ENCODE measurements at regions of chr9 and their contacts with region 1.

Region 1: GRCh38 chr9:4762108-4762885 is 21.3 kb upstream of the AK3 start:
- DNase-seq: peak; percentile 88
- H3K4me3 Mint-ChIP-seq: peak overlapping the region; percentile 17
- H3K27ac Mint-ChIP-seq: peak overlapping the region; percentile 42
- H3K4me1 Mint-ChIP-seq: peaks cover 11% of the 10 kb centered on the region
- H3K27me3 Mint-ChIP-seq: peaks cover 3% of the 10 kb centered on the region

Region 2: DNA sequence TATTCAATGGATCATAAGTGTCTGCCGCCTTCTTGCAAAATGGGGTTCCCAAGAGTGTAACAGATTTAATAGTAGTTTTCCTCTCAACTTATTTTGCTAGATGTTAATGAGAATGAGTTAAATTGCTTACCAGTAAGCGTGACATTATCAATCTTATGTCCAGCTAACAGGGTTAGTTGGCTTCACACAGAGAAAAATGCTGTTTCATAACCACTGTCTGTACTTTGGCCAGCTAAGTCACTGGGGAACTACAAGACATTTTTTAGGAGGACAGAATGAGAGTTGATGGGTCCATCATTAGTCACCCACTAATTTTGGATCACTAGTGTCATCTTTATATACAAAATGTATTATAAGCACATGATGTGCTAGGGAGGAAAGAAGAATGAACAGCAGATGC is 81.5 kb before region 1 on chr9:
- CTCF ChIA-PET with region 1: no interaction called
- POLR2A ChIA-PET with region 1: no interaction called
- intact Hi-C with region 1: no loop called
- DNase-seq: no peak
- H3K4me3 Mint-ChIP-seq: no peak overlapping the region
- H3K27ac Mint-ChIP-seq: no peak overlapping the region
- H3K4me1 Mint-ChIP-seq: peaks cover 19% of the 10 kb centered on the region
- H3K27me3 Mint-ChIP-seq: no peaks in the 10 kb centered on the region

Region 3: DNA sequence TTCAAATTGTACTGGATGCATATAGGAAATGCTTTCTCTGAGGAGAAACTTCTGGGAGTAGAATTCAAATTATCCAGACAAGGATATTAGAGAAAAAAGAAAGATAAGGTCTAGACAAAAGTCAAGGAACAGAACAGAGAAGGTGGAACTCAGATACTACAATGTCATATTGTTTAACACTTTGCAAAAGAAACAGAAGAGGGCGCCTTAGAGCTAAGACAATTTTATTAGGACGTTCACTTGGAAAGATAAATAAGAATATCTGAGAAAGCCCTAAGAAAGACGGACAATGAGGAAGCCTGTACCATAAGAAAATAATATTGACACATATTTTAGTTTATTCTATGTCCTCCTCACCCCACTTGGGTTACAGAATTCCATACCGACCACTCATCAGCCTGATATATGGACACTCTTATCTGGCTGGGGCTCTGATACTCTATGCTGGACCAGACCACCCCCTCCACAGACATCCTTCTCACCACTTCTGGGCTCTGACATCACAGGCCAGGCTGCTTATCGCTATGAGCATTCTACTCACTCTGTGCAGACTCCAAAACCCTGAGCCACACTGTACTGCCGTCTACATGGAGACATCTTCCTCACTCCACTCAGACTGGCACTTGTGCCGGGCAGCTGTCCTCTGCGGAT is 12.1 kb before region 1 on chr9:
- CTCF ChIA-PET with region 1: interaction called, 33 read pairs
- POLR2A ChIA-PET with region 1: no interaction called
- intact Hi-C with region 1: no loop called
- DNase-seq: no peak
- H3K4me3 Mint-ChIP-seq: no peak overlapping the region
- H3K27ac Mint-ChIP-seq: no peak overlapping the region
- H3K4me1 Mint-ChIP-seq: peaks cover 20% of the 10 kb centered on the region
- H3K27me3 Mint-ChIP-seq: no peaks in the 10 kb centered on the region

Region 4: DNA sequence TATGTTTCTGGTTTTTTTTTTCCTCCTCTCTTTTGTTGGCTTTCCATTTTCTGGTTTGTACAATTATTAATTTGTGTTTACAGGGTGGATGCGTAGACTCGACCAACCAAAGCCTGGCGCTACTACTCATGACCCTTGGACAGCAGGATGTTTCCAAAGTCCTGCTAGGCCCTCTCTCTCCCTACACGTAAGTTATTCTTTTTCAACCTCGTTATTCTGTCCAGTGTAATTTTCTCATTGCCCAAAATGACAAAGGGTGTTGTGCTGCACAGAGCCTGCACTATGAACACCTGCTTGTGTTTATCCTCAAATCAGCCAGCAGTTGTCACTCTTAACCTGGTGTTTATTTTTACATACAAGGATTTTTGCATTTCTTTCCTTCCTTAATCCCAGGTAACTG is 87.1 kb after region 1 on chr9:
- CTCF ChIA-PET with region 1: interaction called, 5 read pairs
- POLR2A ChIA-PET with region 1: no interaction called
- intact Hi-C with region 1: loop called (anchors 5 kb)
- DNase-seq: no peak
- H3K4me3 Mint-ChIP-seq: no peak overlapping the region
- H3K27ac Mint-ChIP-seq: no peak overlapping the region
- H3K4me1 Mint-ChIP-seq: peaks cover 5% of the 10 kb centered on the region
- H3K27me3 Mint-ChIP-seq: no peaks in the 10 kb centered on the region

Region 5: DNA sequence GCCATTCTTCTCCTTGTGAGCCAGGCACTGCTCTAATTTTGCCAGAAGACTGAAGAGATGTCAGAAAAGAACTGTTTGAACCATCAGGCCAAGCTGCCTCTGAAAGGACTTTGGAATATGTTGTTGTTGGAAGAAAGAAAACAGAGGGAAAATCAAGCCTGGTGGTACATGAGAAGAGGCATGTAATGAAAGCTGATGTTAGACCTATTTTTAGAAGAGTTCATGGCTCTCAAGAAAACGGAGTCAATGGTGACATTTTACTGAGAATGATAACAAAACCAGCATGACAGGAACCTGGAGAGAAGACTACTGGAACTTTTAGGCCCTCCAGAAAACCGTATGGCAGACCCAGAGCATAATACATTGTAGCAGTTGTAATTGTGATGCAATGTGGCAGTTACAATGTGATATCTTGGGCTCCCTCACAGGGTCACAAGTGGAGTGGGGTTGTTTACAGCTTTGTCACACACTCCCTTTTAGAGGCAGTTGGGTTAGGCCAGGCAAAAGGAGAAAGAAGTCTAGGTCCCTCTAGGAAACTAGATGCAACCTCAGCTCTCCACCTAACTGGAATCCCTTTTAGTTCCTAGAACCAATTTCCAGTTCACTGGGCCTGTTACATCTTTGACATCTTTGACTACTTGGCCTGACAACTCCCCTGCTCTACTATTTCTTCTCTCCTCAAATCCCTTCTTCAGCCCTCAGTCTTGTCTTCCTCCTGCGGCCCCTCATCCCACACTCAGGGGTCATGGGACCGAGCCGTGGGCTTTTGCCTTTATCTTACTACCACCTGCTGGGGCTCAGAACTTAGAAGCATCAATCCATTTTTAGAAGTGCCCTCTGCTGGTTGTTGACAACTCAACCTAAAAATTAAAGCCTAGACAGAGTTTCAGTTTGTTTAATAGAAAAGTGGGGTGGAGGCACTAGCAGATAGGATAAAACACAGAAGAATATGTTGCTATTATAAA is 161.6 kb after region 1 on chr9:
- CTCF ChIA-PET with region 1: interaction called, 26 read pairs
- POLR2A ChIA-PET with region 1: no interaction called
- intact Hi-C with region 1: loop called (anchors 1 kb)
- DNase-seq: no peak
- H3K4me3 Mint-ChIP-seq: no peak overlapping the region
- H3K27ac Mint-ChIP-seq: no peak overlapping the region
- H3K4me1 Mint-ChIP-seq: peaks cover 22% of the 10 kb centered on the region
- H3K27me3 Mint-ChIP-seq: no peaks in the 10 kb centered on the region

Region 6: GRCh38 chr9:5186416-5187169 is 424.3 kb after region 1 on chr9:
- CTCF ChIA-PET with region 1: interaction called, 10 read pairs
- POLR2A ChIA-PET with region 1: no interaction called
- intact Hi-C with region 1: loop called (anchors 2 kb)
- DNase-seq: peak; percentile 74
- H3K4me3 Mint-ChIP-seq: no peak overlapping the region
- H3K27ac Mint-ChIP-seq: no peak overlapping the region
- H3K4me1 Mint-ChIP-seq: peaks cover 15% of the 10 kb centered on the region
- H3K27me3 Mint-ChIP-seq: no peaks in the 10 kb centered on the region

Region 7: GRCh38 chr9:5593904-5594303 is 831.6 kb after region 1 on chr9:
- CTCF ChIA-PET with region 1: interaction called, 27 read pairs
- POLR2A ChIA-PET with region 1: no interaction called
- intact Hi-C with region 1: no loop called
- DNase-seq: no peak
- H3K4me3 Mint-ChIP-seq: no peak overlapping the region
- H3K27ac Mint-ChIP-seq: no peak overlapping the region
- H3K4me1 Mint-ChIP-seq: peaks cover 23% of the 10 kb centered on the region
- H3K27me3 Mint-ChIP-seq: no peaks in the 10 kb centered on the region